Activated CD4-positive, alpha-beta T cell treated with anti-CD3 and anti-CD28 coated beads, Interleukin-2, amount 10 ng/mL, durations not matched to agents 24 days and 14 days (primary cell): ENCODE measurements at regions of chr6 and their contacts with region 1.

Region 1: DNA sequence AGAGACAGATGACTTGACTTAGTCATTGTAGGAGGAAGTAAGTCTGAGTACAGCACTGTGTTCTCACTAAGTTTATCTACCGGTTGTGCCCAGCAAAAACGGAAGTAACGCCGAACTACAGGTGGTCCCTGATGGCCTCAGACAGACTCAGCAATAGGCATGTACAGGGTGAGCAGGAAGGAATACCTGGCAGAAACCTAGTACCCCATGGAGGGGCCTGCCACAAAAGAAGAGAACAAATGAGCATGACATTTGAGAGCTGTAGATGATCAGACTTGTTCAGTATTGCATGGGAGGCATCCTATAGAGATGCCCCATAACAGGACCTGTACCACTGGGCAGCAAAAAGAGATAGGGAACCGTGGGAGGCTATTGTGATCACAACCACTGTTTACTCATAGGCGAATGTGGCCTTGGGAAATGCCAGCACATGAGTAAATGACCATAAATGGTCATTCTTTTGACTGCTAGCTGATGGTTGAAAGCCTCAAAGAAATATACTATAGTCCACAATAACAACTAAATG is 106.4 kb upstream of the TAB2 start:
- DNase-seq: peak; percentile 74
- H3K4me3 Mint-ChIP-seq: no peak overlapping the region
- H3K27ac Mint-ChIP-seq: no peak overlapping the region
- H3K4me1 Mint-ChIP-seq: peaks cover 29% of the 10 kb centered on the region
- H3K27me3 Mint-ChIP-seq: no peaks in the 10 kb centered on the region

Region 2: DNA sequence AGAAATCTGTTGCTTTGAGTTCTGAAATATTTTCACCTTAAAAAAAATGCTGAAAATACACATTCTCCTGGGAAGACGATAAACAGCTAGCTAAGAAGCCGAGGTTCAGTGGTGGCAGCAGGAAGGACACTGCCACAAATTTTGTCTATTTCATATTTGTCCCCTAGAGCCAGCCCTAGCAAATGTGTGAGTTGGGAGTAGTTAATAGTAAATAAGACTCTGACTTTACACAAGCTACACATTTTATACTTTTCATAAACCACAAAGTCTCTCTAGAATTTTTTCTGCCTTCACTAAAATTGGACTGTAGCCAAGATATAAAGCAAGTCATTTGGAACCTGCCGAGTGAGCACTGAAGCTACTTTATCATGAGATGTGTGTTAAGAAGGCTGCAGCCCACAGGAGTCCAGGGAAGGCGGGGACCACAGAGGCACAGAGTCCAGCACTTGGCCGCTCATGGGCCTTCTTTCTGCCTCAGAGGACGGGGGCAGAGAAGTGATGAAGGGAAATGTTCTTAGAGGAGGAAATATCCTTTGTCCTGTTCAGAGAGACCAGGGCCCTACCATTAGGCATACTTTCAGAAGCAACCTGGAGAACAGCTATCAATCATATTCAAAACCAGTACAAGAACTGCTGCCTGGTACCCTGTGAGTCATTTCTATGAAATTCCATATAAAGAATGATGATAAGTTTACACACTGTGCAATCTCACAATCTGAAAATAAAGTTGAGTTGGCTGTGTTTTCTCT is 135.3 kb before region 1 on chr6:
- intact Hi-C with region 1: no loop called
- DNase-seq: peak; percentile 68
- H3K4me3 Mint-ChIP-seq: peak overlapping the region; percentile 10
- H3K27ac Mint-ChIP-seq: peak overlapping the region; percentile 87
- H3K4me1 Mint-ChIP-seq: peaks cover 45% of the 10 kb centered on the region
- H3K27me3 Mint-ChIP-seq: no peaks in the 10 kb centered on the region

Region 3: GRCh38 chr6:149094156-149094555 is 117.0 kb before region 1 on chr6:
- intact Hi-C with region 1: loop called (anchors 2 kb)
- DNase-seq: peak; percentile 76
- H3K4me3 Mint-ChIP-seq: peak overlapping the region; percentile 71
- H3K27ac Mint-ChIP-seq: peak overlapping the region; percentile 95
- H3K4me1 Mint-ChIP-seq: peaks cover 74% of the 10 kb centered on the region
- H3K27me3 Mint-ChIP-seq: no peaks in the 10 kb centered on the region

Region 4: DNA sequence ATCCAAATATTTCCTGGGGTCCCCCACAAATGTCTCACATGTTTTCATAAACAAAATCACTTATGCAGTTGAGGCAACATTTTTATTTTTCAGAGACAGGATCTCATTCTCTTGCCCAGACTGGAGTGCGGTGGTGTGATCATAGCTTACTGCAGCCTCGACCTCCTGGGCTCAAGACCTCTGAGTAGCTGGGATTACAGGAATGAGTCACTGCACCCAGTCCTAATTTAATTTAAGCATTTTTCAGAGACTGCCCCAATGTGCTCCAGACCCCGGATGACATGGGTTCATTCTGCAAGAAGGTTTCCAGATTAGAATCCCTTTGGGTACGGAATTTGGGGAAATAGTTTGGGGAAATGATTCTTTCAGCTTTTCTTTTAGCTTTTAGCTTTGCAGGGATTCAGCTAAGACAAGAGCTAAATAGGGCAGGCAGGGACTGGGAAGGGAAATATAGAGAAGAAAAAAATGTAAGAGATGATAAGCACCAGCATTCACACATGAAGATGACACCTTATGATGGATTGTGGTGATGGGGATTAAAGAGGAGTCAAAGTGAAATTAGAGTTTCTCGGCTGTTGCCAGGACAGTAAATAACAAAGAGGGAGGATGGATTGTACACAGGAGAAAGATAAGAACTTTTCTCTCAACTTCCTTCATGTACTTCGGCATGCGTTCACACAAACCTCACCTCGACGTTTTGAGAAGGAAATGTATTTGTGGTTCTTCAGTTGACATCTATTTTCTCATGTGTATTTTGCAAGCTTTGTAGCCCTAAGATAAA is 63.0 kb before region 1 on chr6:
- intact Hi-C with region 1: loop called (anchors 1 kb)
- DNase-seq: peak; percentile 85
- H3K4me3 Mint-ChIP-seq: peak overlapping the region; percentile 70
- H3K27ac Mint-ChIP-seq: peak overlapping the region; percentile 94
- H3K4me1 Mint-ChIP-seq: peaks cover 80% of the 10 kb centered on the region
- H3K27me3 Mint-ChIP-seq: no peaks in the 10 kb centered on the region

Region 5: DNA sequence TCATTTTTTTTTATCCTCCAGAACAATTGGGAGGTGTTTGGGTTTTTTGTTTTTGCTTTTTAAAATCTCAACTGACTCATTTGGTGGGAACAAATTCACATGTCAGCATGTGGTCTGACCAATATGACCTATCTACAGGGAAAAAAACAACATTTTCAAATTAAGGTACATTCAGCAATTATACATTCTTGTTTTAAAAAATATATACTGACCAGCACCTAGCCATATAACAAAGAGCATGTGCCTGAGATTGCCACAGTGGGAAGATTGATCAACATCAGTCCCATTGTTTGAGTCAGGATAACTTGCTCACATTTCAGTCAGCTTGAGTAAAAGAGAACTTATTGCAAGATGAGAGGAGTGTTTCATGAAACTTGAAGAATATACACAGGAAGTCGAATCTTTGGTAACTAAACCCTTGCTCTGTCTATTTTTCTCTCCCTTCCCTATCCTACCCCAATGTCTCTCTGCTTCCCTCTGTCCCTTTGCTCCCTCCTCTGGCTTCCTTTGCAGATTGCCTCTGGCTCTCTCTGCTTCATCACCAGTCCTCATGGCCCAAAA is 56.8 kb before region 1 on chr6:
- intact Hi-C with region 1: loop called (anchors 1 kb)
- DNase-seq: peak; percentile 62
- H3K4me3 Mint-ChIP-seq: peak overlapping the region; percentile 71
- H3K27ac Mint-ChIP-seq: peak overlapping the region; percentile 94
- H3K4me1 Mint-ChIP-seq: peaks cover 69% of the 10 kb centered on the region
- H3K27me3 Mint-ChIP-seq: no peaks in the 10 kb centered on the region

Region 6: DNA sequence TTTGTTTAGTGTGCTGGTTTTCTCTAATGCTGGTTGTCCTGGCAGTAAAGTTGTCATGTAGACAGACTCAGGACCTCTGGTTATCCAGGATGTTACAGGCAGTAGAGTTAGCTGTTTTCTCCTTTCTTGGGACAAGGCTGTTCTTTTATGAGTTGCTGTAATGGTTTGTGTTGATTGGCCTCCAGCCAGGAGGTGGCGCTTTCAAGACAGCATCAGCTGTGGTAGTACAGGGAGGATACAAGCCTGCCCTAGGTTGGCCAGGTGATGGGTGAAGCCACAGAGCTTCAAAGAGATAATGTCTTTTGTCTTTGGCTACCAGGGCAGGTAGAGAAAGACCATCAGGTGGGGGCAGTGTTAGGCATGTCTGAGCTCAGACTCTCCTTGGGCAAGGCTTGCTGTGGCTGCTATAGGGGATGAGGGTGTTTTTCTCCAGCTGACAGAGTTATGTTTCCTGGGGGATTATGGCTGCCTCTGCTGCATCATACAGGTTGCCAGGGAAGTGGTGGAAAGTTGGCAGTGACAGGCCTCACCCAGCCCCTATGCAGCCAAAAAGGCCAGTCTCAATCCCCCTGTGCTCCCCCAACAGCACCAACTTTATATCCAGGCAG is 20.8 kb before region 1 on chr6:
- intact Hi-C with region 1: no loop called
- DNase-seq: peak; percentile 69
- H3K4me3 Mint-ChIP-seq: no peak overlapping the region
- H3K27ac Mint-ChIP-seq: peak overlapping the region; percentile 59
- H3K4me1 Mint-ChIP-seq: peaks cover 28% of the 10 kb centered on the region
- H3K27me3 Mint-ChIP-seq: no peaks in the 10 kb centered on the region

Region 7: GRCh38 chr6:149246691-149247384 is 35.7 kb after region 1 on chr6:
- intact Hi-C with region 1: no loop called
- DNase-seq: no peak
- H3K4me3 Mint-ChIP-seq: peak overlapping the region; percentile 50
- H3K27ac Mint-ChIP-seq: peak overlapping the region; percentile 75
- H3K4me1 Mint-ChIP-seq: peaks cover 38% of the 10 kb centered on the region
- H3K27me3 Mint-ChIP-seq: no peaks in the 10 kb centered on the region

Region 8: DNA sequence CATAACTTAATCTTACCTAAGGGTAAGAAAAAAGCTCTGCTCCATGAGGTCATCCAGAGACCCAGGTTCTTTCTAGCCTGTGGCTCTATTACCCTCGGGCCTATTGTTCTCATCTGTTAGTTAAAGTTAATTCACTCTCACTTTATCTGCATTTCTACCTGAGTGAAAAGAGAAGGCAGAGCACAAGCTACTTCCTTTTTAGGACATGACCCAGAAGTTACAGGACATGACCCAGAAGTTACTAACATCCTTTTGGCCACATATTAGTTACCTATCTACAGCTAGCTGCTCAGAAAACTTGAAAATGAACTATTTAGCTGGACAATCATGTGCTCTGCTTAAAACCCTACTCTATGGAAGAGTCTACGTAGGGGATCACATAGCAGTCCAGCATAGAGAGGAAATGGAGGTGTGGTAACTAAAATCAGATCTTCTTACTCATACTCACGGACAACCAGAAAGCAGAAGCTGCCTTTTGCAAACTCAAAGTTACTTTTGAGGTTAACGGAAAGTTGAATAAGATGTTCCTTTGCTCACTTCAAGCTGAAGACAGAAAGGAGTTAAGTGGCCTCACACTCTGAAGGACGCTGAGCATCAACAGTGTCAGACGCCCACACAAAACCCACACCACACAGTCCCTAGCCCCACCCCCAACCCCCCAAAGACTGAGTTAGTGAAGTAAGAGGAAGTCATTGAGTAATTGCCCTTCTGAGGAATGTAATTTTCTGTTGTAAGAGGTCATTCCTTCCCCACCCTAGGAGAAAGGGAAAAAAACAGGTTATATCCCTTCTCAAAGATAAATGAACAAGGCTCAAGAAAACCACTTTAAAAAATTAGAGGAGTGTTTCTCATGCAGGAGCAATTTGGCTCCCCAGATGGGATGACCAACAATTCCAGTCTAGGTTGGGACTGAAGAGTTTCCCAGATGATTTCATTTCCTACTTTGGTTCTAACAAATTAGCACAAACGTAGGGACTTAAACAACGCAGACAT is 60.5 kb after region 1 on chr6:
- intact Hi-C with region 1: loop called (anchors 2 kb)
- DNase-seq: peak; percentile 74
- H3K4me3 Mint-ChIP-seq: peak overlapping the region; percentile 60
- H3K27ac Mint-ChIP-seq: peak overlapping the region; percentile 94
- H3K4me1 Mint-ChIP-seq: peaks cover 37% of the 10 kb centered on the region
- H3K27me3 Mint-ChIP-seq: no peaks in the 10 kb centered on the region

Region 9: DNA sequence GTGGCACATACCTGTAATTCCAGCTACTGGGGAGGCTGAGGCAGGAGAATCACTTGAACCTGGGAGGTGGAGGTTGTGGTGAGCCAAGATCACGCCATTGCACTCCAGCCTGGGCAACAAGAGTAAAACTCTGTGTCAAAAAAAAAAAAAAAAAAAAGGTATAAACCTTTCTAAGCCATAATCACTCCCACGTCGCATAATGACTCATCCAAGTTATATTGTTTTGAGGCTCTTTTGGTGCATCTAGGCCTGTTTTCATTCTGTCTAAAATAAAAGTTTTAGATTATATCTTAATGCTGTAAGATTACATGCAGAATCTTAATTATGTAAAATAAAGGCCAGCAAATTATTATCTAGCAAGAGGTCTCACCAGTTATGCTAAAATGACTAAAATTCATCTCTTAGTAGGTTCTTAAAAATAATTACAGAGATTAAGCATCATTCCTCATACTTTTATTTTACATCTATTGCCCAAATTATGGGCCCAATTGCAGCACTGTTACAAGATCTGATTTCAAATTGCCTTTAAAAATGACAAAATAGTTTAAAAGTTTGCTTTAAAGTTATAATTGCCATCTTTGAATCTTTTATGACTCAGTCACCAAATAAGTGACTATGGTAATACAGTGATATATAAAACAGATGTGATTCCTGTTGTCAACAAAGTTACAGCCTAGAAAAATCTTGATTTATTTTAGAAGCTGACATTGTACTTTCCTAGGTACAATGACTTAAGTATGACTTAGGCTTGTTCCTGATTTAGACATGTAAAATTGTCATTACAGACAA is 178.6 kb after region 1 on chr6:
- intact Hi-C with region 1: loop called (anchors 5 kb)
- DNase-seq: no peak
- H3K4me3 Mint-ChIP-seq: no peak overlapping the region
- H3K27ac Mint-ChIP-seq: peak overlapping the region; percentile 46
- H3K4me1 Mint-ChIP-seq: peaks cover 60% of the 10 kb centered on the region
- H3K27me3 Mint-ChIP-seq: no peaks in the 10 kb centered on the region

Region 10: DNA sequence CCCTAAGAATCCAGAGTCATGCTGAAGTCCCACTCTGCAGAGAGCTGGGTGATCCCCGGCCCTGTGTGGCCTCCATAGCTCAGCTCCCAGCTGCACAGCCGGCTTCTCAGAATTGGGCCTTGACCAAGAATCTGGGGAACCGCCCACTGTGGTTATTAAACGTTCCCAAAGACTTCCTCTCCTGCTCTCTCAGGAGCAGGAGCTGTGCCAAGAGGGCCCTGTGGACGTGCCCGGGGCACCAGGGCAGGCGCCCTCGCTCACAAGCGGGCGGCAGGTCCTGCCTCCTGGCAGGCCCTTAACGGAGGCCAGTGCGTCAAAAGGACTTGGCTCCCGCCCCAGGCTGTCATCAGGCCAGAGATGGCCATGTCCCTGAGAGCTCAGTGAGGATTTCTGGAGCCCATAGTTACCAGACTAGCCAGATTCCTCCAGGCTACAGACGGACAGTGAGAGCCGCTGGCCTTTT is 243.3 kb after region 1 on chr6:
- intact Hi-C with region 1: no loop called
- DNase-seq: no peak
- H3K4me3 Mint-ChIP-seq: no peak overlapping the region
- H3K27ac Mint-ChIP-seq: no peak overlapping the region
- H3K4me1 Mint-ChIP-seq: peaks cover 23% of the 10 kb centered on the region
- H3K27me3 Mint-ChIP-seq: no peaks in the 10 kb centered on the region

Region 11: DNA sequence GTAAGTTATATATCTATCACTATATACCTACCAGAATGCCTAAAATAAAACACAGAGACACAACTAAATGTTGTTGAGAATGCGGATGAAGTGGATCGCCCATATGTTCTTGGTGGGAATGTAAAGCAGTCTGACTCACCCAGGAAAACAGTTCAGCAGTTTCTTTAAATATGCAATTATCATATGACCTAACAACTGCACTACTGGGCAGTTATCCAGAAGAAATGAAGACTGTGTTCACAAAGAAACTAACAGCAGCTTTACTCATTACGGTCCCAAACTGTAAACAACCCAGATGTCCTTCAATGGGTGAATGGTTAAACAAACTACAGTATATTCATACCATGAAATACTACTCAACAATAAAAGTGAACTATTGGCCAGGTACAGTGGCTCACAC is 288.0 kb after region 1 on chr6:
- intact Hi-C with region 1: loop called (anchors 5 kb)
- DNase-seq: peak; percentile 38
- H3K4me3 Mint-ChIP-seq: no peak overlapping the region
- H3K27ac Mint-ChIP-seq: peak overlapping the region; percentile 48
- H3K4me1 Mint-ChIP-seq: peaks cover 63% of the 10 kb centered on the region
- H3K27me3 Mint-ChIP-seq: no peaks in the 10 kb centered on the region